Motor neuron (in vitro differentiated cells): ENCODE measurements at regions of chr13 and their contacts with region 1.

Region 1: DNA sequence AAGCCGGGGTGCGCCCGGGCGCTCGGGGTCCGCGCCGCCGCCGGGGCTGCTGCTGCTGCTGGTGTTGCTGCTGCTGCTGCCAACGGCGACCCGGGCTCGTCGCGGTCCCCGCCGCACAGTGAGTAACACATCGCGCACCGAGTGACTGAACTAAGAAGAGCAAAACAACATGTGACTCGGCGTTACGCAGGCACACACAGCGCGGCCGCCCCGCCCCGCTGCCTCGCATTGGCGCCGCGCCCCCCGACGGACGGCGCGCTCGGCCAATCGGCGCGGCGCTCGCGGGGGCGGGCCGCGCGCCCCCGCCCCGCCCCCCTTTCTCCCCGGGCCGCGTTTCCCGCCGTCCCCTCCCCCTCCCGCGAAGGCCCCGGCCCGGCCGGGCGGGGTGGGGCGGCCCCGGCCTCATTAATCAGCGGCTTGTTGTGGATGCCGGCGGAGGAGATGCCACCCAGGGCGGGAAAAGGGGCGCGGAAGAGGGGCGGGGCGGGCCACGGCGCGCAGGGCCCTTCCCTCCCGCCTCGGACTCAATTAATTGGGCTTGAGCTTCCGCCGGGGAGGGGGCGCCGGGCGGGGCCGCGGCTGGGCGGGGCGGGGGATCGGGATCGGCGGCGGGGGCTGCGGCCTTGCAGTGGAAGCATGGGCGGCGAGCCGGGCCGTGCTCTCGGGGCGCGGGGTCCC is at the start of gene IRS2:
- ATAC-seq: peak; percentile 75 to 90 (median 77)
- H3K4me3 ChIP-seq: peak within 1 kb of the TSS; percentile 67 to 92 (median 78)
- H3K27ac ChIP-seq: peak within 1 kb of the TSS; percentile 83 to 92
- H3K4me1 ChIP-seq: peaks cover 13 to 20% of the 10 kb centered on the region in 2 donors
- total RNA-seq, gene IRS2: 0.20 to 13.5 (median 7.7) TPM

Region 2: GRCh38 chr13:108218044-108218974 is 1568.3 kb before region 1 on chr13 and contains the start of gene ABHD13:
- in situ Hi-C with region 1: no loop called
- ATAC-seq: peak; percentile 69 to 85 (median 74)
- H3K4me3 ChIP-seq: peak within 1 kb of the TSS; percentile 79 to 90 (median 83)
- H3K27ac ChIP-seq: peak within 1 kb of the TSS; percentile 87 to 94
- H3K4me1 ChIP-seq: peaks cover 16 to 37% of the 10 kb centered on the region in 2 donors
- total RNA-seq, gene ABHD13: 6.6 to 12.6 (median 10.6) TPM

Region 3: GRCh38 chr13:108961542-108962125 is 825.0 kb before region 1 on chr13:
- in situ Hi-C with region 1: loop called in 4 of 9 experiments (anchors 25 kb)
- ATAC-seq: peak; percentile 26 to 76 (median 54)
- H3K4me3 ChIP-seq: no peak overlapping the region
- H3K27ac ChIP-seq: no peak overlapping the region
- H3K4me1 ChIP-seq: peaks cover 0 to 6% of the 10 kb centered on the region in 2 donors

Region 4: DNA sequence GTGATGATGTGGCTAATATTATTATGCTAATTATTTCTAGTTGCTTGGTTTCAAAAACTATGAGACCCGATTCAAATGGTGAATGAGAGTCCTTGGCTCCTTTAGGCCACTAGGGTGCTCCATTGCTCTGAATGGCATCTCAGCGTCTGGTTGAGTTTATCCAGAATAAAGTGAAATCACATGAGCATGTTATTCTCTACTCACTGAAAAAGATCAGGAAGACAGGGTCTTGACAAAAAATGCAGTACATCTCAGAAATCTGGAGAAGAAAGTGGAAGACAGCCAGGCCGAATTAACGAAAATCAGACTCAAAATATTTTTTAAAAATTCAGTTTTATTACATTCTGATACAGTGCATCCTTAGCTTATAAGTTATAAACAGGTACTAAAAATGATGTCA is 641.0 kb before region 1 on chr13:
- in situ Hi-C with region 1: loop called in 4 of 9 experiments (anchors 25 kb)
- ATAC-seq: peak in 5 of 8 experiments; percentile 69 to 90 (median 84)
- H3K4me3 ChIP-seq: no peak overlapping the region
- H3K27ac ChIP-seq: no peak overlapping the region
- H3K4me1 ChIP-seq: peaks cover 24 to 43% of the 10 kb centered on the region in 2 donors

Region 5: GRCh38 chr13:109162248-109163053 is 624.1 kb before region 1 on chr13:
- in situ Hi-C with region 1: loop called in 1 of 9 experiments (anchors 25 kb)
- ATAC-seq: peak in 4 of 8 experiments; percentile 32 to 75 (median 48)
- H3K4me3 ChIP-seq: no peak overlapping the region
- H3K27ac ChIP-seq: no peak overlapping the region
- H3K4me1 ChIP-seq: peaks cover 5 to 12% of the 10 kb centered on the region in 2 donors

Region 6: DNA sequence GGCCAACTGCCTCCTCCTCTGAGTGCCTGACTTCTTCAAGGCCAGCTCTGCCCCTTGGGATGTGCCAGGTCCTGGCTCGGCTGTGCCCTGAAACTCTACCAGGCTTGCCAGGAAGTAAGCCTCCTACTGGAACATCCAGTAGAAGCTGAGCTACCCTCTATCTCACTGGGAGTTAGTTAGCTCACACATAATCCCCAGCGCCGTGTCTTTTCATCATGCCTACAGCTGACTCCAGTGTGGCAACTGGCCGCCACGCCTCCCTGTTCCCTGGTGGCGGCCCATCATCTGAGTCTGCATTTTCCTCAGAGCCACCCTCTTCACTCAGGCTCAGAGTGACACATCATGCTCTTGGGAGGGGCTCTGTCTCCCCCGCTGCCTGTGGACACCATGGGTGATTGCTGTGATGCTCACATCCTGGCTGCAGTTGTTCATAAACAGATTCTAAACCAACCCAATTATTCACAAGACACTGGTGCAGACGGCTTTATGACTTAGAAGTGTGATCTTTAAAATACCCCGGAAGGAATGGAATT is 131.6 kb after region 1 on chr13:
- in situ Hi-C with region 1: no loop called
- ATAC-seq: peak; percentile 39 to 97 (median 74)
- H3K4me3 ChIP-seq: no peak overlapping the region
- H3K27ac ChIP-seq: no peak overlapping the region
- H3K4me1 ChIP-seq: no peaks in the 10 kb centered on the region

Region 7: DNA sequence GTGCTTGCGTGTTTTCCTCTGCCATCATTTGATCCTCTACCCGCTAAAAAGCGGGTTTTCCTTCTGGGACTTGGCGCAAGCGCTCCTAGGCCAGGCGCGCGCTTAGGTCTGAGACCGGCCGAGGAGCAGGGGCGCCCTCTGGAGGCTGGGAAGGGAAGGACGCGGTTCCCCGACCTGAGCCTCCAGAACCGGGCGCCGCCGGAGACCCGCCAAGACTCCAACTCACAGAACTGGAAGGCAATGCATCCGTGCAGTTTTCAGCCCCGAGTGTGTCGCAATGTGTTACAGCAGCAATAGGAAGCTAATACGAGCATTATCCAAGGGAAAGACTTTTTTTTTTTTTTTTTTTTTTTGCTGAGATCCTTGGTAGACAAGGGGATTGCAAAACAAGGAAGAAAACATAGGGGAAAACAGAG is 329.5 kb after region 1 on chr13:
- in situ Hi-C with region 1: loop called in 2 of 9 experiments (anchors 25 kb)
- ATAC-seq: peak in 3 of 8 experiments; percentile 43 to 88 (median 47)
- H3K4me3 ChIP-seq: no peak overlapping the region
- H3K27ac ChIP-seq: no peak overlapping the region
- H3K4me1 ChIP-seq: peaks cover 0 to 2% of the 10 kb centered on the region in 2 donors